ENCODE measurements at regions of chr1 and their contacts with region 1.

Region 1: GRCh38 chr1:6245086-6245868 is 1.3 kb downstream of the HES3 start:
- DNase-seq: peak in 1 of 2 donors; percentile 39
- ATAC-seq: peak; percentile 48 to 65
- H3K4me3 ChIP-seq: no peak overlapping the region
- H3K27ac ChIP-seq: no peak overlapping the region
- H3K4me1 ChIP-seq: peaks cover 3 to 8% of the 10 kb centered on the region in 2 donors
- H3K27me3 ChIP-seq: peaks cover 52 to 81% (median 69%) of the 10 kb centered on the region in 3 donors
- CTCF ChIP-seq: peak; percentile 49 to 84 (median 71)
- POLR2A ChIP-seq: no peak

Region 2: GRCh38 chr1:5707566-5708340 is 537.5 kb before region 1 on chr1:
- in situ Hi-C with region 1: no loop called
- intact Hi-C with region 1: no loop called
- DNase-seq: no peak
- ATAC-seq: no peak
- H3K4me3 ChIP-seq: no peak overlapping the region
- H3K27ac ChIP-seq: no peak overlapping the region
- H3K4me1 ChIP-seq: no peaks in the 10 kb centered on the region
- H3K27me3 ChIP-seq: no peaks in the 10 kb centered on the region
- CTCF ChIP-seq: no peak
- POLR2A ChIP-seq: no peak

Region 3: DNA sequence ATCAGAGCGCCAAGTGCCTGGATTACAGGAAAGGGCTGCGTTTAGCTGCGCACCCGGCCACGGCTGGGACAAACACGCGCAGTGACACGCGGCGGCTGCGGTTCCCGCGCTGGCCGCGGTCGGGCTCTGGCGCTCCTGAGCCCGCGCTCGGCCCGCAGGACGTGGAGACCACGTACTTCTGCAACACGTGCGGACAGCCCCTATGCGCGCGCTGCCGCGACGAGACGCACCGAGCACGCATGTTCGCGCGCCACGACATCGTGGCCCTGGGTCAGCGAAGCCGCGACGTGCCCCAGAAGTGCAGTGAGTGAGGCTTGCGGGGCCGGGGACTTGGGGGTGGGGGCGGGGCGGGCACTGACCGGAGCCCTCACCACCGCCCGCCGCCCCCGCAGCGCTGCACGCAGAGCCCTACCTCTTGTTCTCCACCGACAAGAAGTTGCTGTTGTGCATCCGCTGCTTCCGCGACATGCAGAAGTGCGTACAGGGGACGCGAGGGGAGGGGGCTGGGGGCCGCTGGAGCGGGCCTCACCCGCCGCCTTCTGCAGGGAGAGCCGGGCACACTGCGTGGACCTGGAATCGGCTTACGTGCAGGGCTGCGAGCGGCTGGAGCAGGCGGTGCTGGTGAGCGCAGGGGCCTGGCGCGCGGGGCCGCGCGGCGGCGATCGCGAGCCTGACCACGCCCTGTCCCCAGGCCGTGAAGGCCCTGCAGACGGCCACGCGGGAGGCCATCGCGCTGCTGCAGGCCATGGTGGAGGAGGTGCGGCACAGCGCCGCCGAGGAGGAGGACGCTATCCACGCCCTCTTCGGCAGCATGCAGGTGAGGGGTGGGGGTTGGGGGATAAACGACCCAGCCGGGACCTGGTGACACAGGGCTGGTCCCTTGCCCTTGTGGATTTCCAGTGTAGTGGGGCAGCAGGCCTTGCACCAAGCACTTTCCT is 36.3 kb before region 1 on chr1:
- in situ Hi-C with region 1: no loop called
- intact Hi-C with region 1: loop called (anchors 2 kb)
- DNase-seq: no peak
- ATAC-seq: peak; percentile 32 to 56
- H3K4me3 ChIP-seq: peak overlapping the region; percentile 49 to 63 (median 56)
- H3K27ac ChIP-seq: no peak overlapping the region
- H3K4me1 ChIP-seq: peaks cover 7 to 25% of the 10 kb centered on the region in 2 donors
- H3K27me3 ChIP-seq: peaks cover 7 to 18% (median 18%) of the 10 kb centered on the region in 3 donors
- CTCF ChIP-seq: peak in 4 of 5 experiments; percentile 52 to 72 (median 59)
- POLR2A ChIP-seq: no peak

Region 4: GRCh38 chr1:6280761-6281451 is 35.6 kb after region 1 on chr1:
- in situ Hi-C with region 1: no loop called
- intact Hi-C with region 1: loop called (anchors 5 kb)
- DNase-seq: no peak
- ATAC-seq: no peak
- H3K4me3 ChIP-seq: no peak overlapping the region
- H3K27ac ChIP-seq: no peak overlapping the region
- H3K4me1 ChIP-seq: peaks cover 7 to 13% of the 10 kb centered on the region in 2 donors
- H3K27me3 ChIP-seq: no peaks in the 10 kb centered on the region
- CTCF ChIP-seq: peak in 1 of 5 experiments; percentile 24
- POLR2A ChIP-seq: no peak

Region 5: GRCh38 chr1:6343506-6344405 is 98.5 kb after region 1 on chr1:
- in situ Hi-C with region 1: loop called in 3 of 4 experiments (anchors 10 kb)
- intact Hi-C with region 1: loop called (anchors 1 kb)
- DNase-seq: peak in 1 of 2 donors; percentile 40
- ATAC-seq: peak; percentile 61 to 73
- H3K4me3 ChIP-seq: no peak overlapping the region
- H3K27ac ChIP-seq: no peak overlapping the region
- H3K4me1 ChIP-seq: no peaks in the 10 kb centered on the region
- H3K27me3 ChIP-seq: no peaks in the 10 kb centered on the region
- CTCF ChIP-seq: peak; percentile 35 to 82 (median 72)
- POLR2A ChIP-seq: no peak

Region 6: DNA sequence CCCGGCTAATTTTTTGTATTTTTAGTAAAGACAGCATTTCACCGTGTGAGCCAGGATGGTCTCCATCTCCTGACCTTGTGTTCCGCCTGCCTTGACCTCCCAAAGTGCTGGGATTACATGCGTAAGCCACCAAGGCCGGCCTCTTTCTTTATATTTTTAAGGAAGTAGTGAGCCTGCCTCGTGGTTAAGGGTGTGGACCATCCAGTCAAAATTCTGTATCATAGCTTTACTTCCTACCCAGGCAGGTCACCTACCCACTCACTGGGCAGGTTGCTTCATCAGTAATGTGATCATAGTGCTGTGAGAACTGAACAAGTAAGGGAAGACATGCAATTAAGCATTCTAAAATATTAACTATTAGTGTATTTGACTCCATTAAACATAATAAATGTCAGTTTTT is 156.4 kb after region 1 on chr1:
- in situ Hi-C with region 1: loop called (anchors 5 to 25 kb)
- intact Hi-C with region 1: loop called (anchors 1 kb)
- DNase-seq: no peak
- ATAC-seq: no peak
- H3K4me3 ChIP-seq: no peak overlapping the region
- H3K27ac ChIP-seq: no peak overlapping the region
- H3K4me1 ChIP-seq: no peaks in the 10 kb centered on the region
- H3K27me3 ChIP-seq: peaks cover 0 to 10% (median 0%) of the 10 kb centered on the region in 3 donors
- CTCF ChIP-seq: no peak
- POLR2A ChIP-seq: no peak

Region 7: DNA sequence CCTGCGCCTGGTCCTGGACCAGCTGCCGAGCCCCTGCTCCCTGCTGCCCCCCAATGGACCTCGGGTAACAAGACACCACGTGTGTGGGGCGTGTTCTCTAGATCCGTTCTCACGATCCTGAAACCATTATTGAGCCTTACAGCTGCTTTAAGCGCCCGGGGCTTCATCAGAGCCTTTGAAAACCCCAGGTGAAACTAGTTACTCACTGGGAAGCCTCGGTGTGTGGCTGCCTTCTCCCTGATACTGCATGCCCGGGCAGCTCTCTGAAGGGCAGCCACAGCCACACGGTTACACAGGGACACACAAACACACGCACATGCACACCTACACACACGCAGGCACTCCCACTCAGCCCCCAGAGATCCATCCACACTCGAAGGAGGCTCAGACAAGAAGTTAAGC is 169.2 kb after region 1 on chr1:
- in situ Hi-C with region 1: loop called in 3 of 4 experiments (anchors 10 to 25 kb)
- intact Hi-C with region 1: no loop called
- DNase-seq: no peak
- ATAC-seq: no peak
- H3K4me3 ChIP-seq: no peak overlapping the region
- H3K27ac ChIP-seq: no peak overlapping the region
- H3K4me1 ChIP-seq: peaks cover 0 to 5% of the 10 kb centered on the region in 2 donors
- H3K27me3 ChIP-seq: peaks cover 62 to 65% (median 63%) of the 10 kb centered on the region in 3 donors
- CTCF ChIP-seq: no peak
- POLR2A ChIP-seq: no peak